Activated CD4-positive, alpha-beta T cell treated with anti-CD3 and anti-CD28 coated beads for 36 hours (primary cell): ENCODE measurements at regions of chr18 and their contacts with region 1.

Region 1: DNA sequence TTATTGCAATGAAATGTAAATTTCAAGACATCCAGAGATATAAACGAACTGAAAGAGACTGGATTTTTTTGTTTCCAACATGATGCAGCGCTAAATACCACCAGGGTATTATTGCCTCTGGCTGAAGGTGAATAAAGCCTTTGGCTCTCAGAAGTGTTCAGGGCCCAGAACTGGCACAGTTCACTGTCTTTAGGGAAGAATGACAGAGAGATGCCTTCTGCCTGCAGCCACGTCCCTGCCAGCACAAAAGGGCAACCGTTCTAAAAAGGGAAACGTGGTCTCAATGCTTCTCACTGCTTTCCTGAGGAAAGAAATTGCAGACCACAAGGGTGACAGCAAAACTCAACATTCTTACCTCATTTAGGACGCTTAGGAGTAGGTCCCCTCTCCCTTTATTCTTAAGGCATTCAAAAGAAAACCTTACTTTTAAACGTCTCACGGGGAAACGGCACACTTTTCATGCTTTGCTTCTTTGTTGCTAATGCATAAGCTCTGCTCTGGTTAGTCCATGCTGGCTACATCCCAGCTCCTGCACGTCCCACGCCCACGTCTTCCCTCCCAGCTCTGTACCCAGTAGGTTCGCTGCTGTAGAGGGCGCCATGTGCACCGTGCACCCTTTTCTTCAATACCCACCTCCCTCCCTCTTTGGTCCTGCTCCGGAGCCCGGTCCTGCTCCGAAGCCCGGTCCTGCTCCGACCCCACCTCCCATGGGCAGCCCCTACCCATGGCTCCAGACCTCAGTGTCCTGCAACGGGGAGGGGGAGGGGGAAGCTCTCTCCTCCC is 171.0 kb downstream of the HRH4 start:
- DNase-seq: peak; percentile 11
- ATAC-seq: no peak
- H3K4me3 Mint-ChIP-seq: no peak overlapping the region
- H3K27ac Mint-ChIP-seq: no peak overlapping the region
- H3K4me1 Mint-ChIP-seq: no peaks in the 10 kb centered on the region
- H3K27me3 Mint-ChIP-seq: no peaks in the 10 kb centered on the region

Region 2: DNA sequence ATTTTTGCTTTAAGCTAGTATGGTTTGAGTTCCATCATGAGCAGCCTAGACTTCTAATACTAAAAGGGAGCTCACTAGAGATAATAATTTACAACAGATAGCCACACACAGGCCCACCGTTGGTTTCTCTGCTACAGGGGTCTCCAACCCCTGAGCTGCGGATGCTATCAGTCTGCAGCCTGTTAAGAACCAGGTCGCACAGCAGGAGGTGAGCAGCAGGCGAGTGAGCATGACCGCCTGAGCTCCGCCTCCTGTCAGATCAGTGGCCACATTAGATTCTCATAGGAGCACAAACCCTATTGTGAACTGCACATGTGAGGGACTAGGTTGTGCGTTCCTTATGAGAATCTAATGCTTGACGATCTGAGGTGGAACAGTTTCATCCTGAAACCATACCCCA is 20.4 kb before region 1 on chr18:
- CTCF ChIA-PET with region 1: no interaction called
- POLR2A ChIA-PET with region 1: no interaction called
- intact Hi-C with region 1: loop called in 1 of 2 experiments (anchors 2 kb)
- DNase-seq: no peak
- ATAC-seq: no peak
- H3K4me3 Mint-ChIP-seq: no peak overlapping the region
- H3K27ac Mint-ChIP-seq: no peak overlapping the region
- H3K4me1 Mint-ChIP-seq: no peaks in the 10 kb centered on the region
- H3K27me3 Mint-ChIP-seq: peaks cover 2% of the 10 kb centered on the region